Left lung (tissue), 14 donors: ENCODE measurements at regions of chr4 and their contacts with region 1.

Region 1: GRCh38 chr4:119559044-119559647 is 69.5 kb downstream of the PDE5A start:
- DNase-seq: peak in 2 of 4 donors; percentile 38 to 71
- ATAC-seq: peak; percentile 70
- H3K4me3 ChIP-seq: no peak overlapping the region
- H3K27ac ChIP-seq: no peak overlapping the region
- H3K4me1 ChIP-seq: no peaks in the 10 kb centered on the region
- H3K27me3 ChIP-seq: no peaks in the 10 kb centered on the region
- CTCF ChIP-seq: peak; percentile 26 to 56

Region 2: GRCh38 chr4:119628308-119629141 is 69.4 kb after region 1 on chr4 and contains the start of gene PDE5A:
- intact Hi-C with region 1: loop called in 1 of 2 experiments (anchors 10 kb)
- DNase-seq: peak; percentile 67 to 96 (median 88)
- ATAC-seq: peak; percentile 93
- H3K4me3 ChIP-seq: peak within 1 kb of the TSS; percentile 72 to 84
- H3K27ac ChIP-seq: peak within 1 kb of the TSS; percentile 84 to 88
- H3K4me1 ChIP-seq: peaks cover 0 to 25% of the 10 kb centered on the region in 2 donors
- H3K27me3 ChIP-seq: peaks cover 0 to 58% of the 10 kb centered on the region in 2 donors
- CTCF ChIP-seq: peak; percentile 73 to 79
- polyA plus RNA-seq, gene PDE5A: 60.5 to 78.2 (median 68.9) TPM

Region 3: GRCh38 chr4:119697887-119698393 is 138.8 kb after region 1 on chr4:
- intact Hi-C with region 1: no loop called
- DNase-seq: no peak
- ATAC-seq: no peak
- H3K4me3 ChIP-seq: no peak overlapping the region
- H3K27ac ChIP-seq: no peak overlapping the region
- H3K4me1 ChIP-seq: peaks cover 0 to 3% of the 10 kb centered on the region in 2 donors
- H3K27me3 ChIP-seq: no peaks in the 10 kb centered on the region
- CTCF ChIP-seq: no peak